ENCODE measurements at regions of chr9 and their contacts with region 1.

Region 1: GRCh38 chr9:74773886-74774479 is 113.7 kb downstream of the TRPM6 start:
- DNase-seq: peak; percentile 48 to 75 (median 69)
- ATAC-seq: peak in 3 of 4 donors; percentile 75 to 83 (median 77)
- H3K4me3 ChIP-seq: no peak overlapping the region
- H3K27ac ChIP-seq: no peak overlapping the region
- H3K4me1 ChIP-seq: peaks cover 0 to 5% (median 0%) of the 10 kb centered on the region in 12 donors
- H3K27me3 ChIP-seq: peaks cover 0 to 5% (median 0%) of the 10 kb centered on the region in 9 donors
- CTCF ChIP-seq: peak; percentile 80 to 95 (median 90)
- POLR2A ChIP-seq: no peak

Region 2: DNA sequence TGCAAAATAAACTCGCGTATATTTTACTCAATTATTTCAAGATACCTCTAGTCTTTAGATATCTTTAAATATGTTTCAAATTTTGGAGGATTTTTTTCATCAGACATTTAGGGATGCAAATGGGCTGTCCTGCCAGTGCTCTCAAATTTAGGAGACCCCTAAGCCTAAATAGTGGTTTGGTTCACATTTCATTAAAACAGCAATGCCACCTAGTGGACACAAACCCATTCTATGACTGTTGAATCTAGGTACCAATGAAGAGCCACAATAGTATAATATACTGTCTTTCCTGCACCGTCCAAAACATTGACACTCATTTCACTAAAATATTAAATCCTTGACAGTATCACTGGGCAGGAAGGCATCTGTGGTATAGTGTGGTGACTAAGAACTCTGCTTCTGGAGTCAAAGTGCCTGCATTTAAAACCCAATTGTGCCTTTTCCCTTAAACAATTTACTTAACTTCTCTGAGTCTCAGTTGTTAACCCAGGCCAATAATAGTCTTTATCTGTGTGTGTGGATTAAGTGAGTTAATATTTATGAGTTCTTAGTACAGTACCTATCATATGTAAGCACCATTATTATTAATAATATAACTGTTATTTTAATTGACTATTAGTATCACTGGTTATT is 128.9 kb before region 1 on chr9:
- intact Hi-C with region 1: no loop called
- DNase-seq: no peak
- ATAC-seq: no peak
- H3K4me3 ChIP-seq: no peak overlapping the region
- H3K27ac ChIP-seq: no peak overlapping the region
- H3K4me1 ChIP-seq: no peaks in the 10 kb centered on the region
- H3K27me3 ChIP-seq: no peaks in the 10 kb centered on the region
- CTCF ChIP-seq: peak; percentile 19 to 52 (median 35)
- POLR2A ChIP-seq: no peak

Region 3: GRCh38 chr9:74838351-74838750 is 64.4 kb after region 1 on chr9:
- intact Hi-C with region 1: loop called in 1 of 10 experiments (anchors 10 kb)
- DNase-seq: no peak
- ATAC-seq: no peak
- H3K4me3 ChIP-seq: no peak overlapping the region
- H3K27ac ChIP-seq: no peak overlapping the region
- H3K4me1 ChIP-seq: no peaks in the 10 kb centered on the region
- H3K27me3 ChIP-seq: no peaks in the 10 kb centered on the region
- CTCF ChIP-seq: no peak
- POLR2A ChIP-seq: no peak

Region 4: DNA sequence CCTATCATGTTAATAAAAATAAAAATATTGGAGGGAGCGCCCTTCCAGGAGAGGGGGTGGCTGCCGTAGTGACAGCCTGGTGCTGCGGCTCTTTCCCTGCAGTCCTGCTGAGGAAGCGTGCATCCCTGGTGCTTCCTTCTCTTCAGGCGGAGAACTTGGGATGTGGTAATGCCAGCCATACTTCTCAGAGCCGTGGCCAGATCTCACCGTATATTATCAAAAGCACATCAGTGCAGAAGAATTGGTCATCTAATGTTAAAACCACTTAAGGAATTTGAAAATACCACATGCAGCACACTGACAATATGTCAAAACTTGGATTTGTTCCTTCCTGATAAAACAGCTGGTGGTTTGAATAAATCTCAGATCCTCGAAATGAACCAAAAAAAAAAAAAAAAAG is 161.0 kb after region 1 on chr9:
- intact Hi-C with region 1: loop called in 1 of 10 experiments (anchors 10 kb)
- DNase-seq: no peak
- ATAC-seq: no peak
- H3K4me3 ChIP-seq: no peak overlapping the region
- H3K27ac ChIP-seq: no peak overlapping the region
- H3K4me1 ChIP-seq: no peaks in the 10 kb centered on the region
- H3K27me3 ChIP-seq: no peaks in the 10 kb centered on the region
- CTCF ChIP-seq: no peak
- POLR2A ChIP-seq: no peak

Region 5: DNA sequence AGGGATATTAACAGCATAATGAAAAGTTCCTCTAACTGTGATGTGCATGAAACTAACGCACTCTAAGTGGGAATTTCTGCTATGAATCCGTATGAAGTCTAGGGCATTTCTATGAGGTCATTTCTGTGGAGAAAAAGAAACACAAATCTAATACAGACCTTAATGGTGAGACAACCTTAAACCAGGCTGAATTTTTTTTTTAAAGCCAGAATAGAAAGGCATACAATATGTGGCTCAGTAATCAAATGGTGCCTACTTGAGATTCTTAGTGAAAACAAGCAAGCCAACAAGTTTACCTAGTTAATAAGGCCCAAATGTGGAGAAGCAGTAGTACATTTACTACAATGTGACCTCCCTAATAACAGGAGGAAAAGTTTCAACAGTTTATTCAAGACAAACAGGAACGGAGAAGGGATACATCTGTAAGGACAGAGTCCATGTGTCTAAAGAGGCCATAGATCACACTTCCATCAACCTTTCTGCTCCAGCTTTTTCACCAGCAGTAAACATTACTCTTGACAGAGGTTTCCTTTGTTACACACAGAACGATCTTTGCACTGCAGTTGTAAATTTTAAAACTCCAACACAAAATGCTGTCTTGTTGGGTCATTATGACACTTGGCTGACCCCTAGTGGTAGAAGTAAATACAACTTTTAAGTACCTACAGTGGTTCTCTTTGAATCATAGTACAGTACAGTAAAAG is 227.9 kb after region 1 on chr9:
- intact Hi-C with region 1: loop called (anchors 1 to 2 kb)
- DNase-seq: peak in 1 of 5 donors; percentile 13
- ATAC-seq: peak; percentile 51 to 89 (median 77)
- H3K4me3 ChIP-seq: no peak overlapping the region
- H3K27ac ChIP-seq: no peak overlapping the region
- H3K4me1 ChIP-seq: peaks cover 0 to 4% (median 0%) of the 10 kb centered on the region in 12 donors
- H3K27me3 ChIP-seq: no peaks in the 10 kb centered on the region
- CTCF ChIP-seq: peak; percentile 58 to 86 (median 82)
- POLR2A ChIP-seq: no peak

Region 6: DNA sequence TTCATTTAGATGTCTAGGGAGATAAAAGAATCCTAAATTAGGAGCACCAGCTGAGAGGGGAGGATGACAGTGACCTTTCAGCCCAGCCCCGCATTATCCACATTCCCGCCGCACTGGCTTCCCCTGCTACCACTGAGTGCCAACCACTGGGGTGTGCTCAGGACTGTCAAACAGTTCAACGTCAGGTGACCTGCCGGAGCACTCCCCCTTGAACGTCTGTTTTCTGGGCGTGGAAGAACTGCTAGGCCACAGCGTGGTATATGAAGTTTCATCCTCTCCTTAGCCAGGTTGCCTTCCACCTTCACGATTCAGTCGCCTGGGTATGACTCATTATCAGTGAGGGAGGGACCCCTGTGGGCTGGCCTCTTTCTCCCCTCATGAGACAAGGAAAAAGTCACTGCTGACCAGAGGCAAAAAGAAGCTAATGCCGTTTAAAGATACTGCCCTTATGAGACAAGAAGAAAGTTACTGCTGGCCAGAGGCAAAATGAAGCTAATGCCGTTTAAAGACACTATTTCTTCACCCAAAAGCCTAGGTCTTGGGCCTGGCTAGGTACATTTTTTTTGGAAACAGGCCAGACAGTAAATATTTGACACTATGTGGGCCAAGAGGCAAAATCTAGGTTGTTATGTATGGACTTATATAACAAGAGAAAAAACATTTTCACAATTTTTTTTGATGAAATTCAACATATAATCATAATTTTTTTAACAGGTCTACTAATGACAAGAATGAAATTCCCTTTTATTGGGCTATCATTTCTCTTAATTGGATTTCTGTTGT is 309.4 kb after region 1 on chr9:
- intact Hi-C with region 1: loop called in 4 of 10 experiments (anchors 1 to 5 kb)
- DNase-seq: peak in 3 of 5 donors; percentile 37 to 56 (median 44)
- ATAC-seq: peak in 3 of 4 donors; percentile 28 to 58 (median 43)
- H3K4me3 ChIP-seq: no peak overlapping the region
- H3K27ac ChIP-seq: peak overlapping the region in 6 of 12 donors; percentile 6 to 58 (median 8)
- H3K4me1 ChIP-seq: peaks cover 0 to 42% (median 19%) of the 10 kb centered on the region in 12 donors
- H3K27me3 ChIP-seq: no peaks in the 10 kb centered on the region
- CTCF ChIP-seq: no peak
- POLR2A ChIP-seq: no peak